ENCODE measurements at regions of chr1 and their contacts with region 1.

Region 1: DNA sequence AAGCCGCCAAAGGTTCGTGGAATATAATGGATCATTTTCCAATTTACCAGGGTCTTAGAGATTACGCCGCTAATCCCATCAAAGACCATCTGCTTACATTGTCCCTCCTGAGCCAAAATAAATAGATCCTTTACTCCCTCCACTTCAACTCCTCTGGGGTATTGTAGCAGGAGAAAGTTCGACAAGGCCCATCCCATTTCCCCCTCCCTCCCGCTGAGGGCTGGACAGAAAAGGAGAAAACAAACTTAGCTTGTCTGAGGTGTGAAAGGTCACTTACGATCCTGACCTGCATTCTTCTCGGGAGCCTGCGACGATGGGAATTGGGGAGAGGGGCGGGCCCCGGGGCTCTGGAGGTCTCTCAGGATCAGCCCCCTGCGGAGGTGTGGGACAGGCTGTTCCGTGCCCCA is 60.8 kb downstream of the MEF2D start:
- DNase-seq: no peak
- H3K4me3 ChIP-seq: no peak overlapping the region
- H3K4me3 Mint-ChIP-seq: peak overlapping the region in 1 of 2 donors; percentile 61
- H3K27ac ChIP-seq: no peak overlapping the region
- H3K27ac Mint-ChIP-seq: no peak overlapping the region
- H3K4me1 ChIP-seq: peaks cover 15 to 16% of the 10 kb centered on the region in 2 donors
- H3K4me1 Mint-ChIP-seq: peaks cover 21% of the 10 kb centered on the region
- H3K27me3 ChIP-seq: peaks cover 88 to 97% of the 10 kb centered on the region in 2 donors
- H3K27me3 Mint-ChIP-seq: peaks cover 96 to 99% (median 97%) of the 10 kb centered on the region in 3 donors
- CTCF ChIP-seq: no peak

Region 2: DNA sequence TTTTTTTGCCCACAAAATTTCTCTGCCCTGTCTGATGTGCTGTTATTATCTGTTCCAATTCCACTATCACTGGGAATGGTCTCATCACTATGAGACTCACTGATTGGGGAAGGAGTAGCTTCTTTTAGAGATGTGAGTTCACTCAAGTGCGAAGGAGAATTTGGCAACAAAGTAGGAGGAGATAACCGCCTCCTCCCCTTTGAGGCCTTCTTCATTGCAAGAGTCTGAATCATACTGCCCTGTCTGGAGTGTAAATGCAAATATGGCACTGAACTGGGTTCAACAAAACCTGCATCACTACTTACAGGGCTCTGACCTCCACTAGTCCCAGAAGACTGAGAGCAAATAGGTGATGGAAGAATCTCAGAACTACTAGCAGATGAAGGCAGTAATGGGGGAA is 960.6 kb before region 1 on chr1:
- intact Hi-C with region 1: no loop called
- DNase-seq: no peak
- H3K4me3 ChIP-seq: no peak overlapping the region
- H3K4me3 Mint-ChIP-seq: no peak overlapping the region
- H3K27ac ChIP-seq: peak overlapping the region in 1 of 2 donors; percentile 39
- H3K27ac Mint-ChIP-seq: peak overlapping the region in 2 of 7 donors; percentile 16 to 61
- H3K4me1 ChIP-seq: no peaks in the 10 kb centered on the region
- H3K4me1 Mint-ChIP-seq: peaks cover 8% of the 10 kb centered on the region
- H3K27me3 ChIP-seq: no peaks in the 10 kb centered on the region
- H3K27me3 Mint-ChIP-seq: no peaks in the 10 kb centered on the region
- CTCF ChIP-seq: no peak

Region 3: GRCh38 chr1:156388174-156389137 is 51.3 kb before region 1 on chr1:
- intact Hi-C with region 1: loop called (anchors 1 to 2 kb)
- DNase-seq: no peak
- H3K4me3 ChIP-seq: no peak overlapping the region
- H3K4me3 Mint-ChIP-seq: peak overlapping the region in 1 of 2 donors; percentile 81
- H3K27ac ChIP-seq: no peak overlapping the region
- H3K27ac Mint-ChIP-seq: no peak overlapping the region
- H3K4me1 ChIP-seq: peaks cover 13 to 17% of the 10 kb centered on the region in 2 donors
- H3K4me1 Mint-ChIP-seq: peaks cover 16% of the 10 kb centered on the region
- H3K27me3 ChIP-seq: peaks cover 24 to 47% of the 10 kb centered on the region in 2 donors
- H3K27me3 Mint-ChIP-seq: peaks cover 44 to 65% (median 53%) of the 10 kb centered on the region in 3 donors
- CTCF ChIP-seq: no peak

Region 4: DNA sequence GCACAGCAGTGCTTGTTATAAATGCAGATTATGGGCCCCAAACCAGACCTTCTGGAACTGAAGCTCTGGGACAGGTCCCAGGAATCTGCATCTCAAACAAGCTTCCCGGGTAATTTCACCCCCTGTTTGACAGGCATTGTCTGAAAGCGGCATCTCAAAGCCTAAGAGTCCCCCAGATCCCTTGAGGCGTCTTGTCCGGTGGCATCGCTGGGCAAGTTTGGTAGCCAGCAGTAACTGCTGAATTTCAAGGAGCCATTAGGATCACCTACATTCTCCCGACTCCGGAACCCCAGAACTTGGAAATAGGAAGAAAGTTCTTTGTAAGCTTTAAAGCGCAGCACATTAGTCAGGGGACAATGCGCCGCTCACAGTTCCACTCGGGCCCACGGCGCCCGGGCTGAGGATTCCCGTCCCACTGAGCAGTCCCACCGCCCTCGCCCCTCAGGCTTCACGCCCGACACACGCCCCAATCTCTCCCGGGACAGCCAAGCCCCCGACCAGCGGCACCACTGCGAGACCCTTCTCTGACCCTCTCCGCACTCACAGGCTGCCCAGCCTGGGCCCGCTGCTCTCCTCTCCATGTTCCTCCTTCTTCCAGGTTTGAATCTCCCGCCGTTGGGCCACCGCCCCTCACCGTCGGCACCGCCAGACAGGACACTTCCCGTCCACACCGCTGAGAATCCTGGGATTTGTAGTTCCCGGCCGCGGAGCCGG is 132.3 kb after region 1 on chr1 and contains the start of gene IQGAP3:
- intact Hi-C with region 1: no loop called
- DNase-seq: peak; percentile 83 to 90 (median 88)
- H3K4me3 ChIP-seq: peak within 1 kb of the TSS; percentile 29 to 77 (median 42)
- H3K4me3 Mint-ChIP-seq: peak within 1 kb of the TSS; percentile 82 to 92
- H3K27ac ChIP-seq: no peak within 1 kb of the TSS
- H3K27ac Mint-ChIP-seq: peak within 1 kb of the TSS in 5 of 7 donors; percentile 21 to 82 (median 39)
- H3K4me1 ChIP-seq: peaks cover 22 to 24% of the 10 kb centered on the region in 2 donors
- H3K4me1 Mint-ChIP-seq: peaks cover 29% of the 10 kb centered on the region
- H3K27me3 ChIP-seq: no peaks in the 10 kb centered on the region
- H3K27me3 Mint-ChIP-seq: peaks cover 0 to 8% (median 7%) of the 10 kb centered on the region in 3 donors
- CTCF ChIP-seq: no peak
- polyA plus RNA-seq, gene IQGAP3: 0.03 to 0.24 TPM in 2 of 3 donors, not detected in the other